ENCODE measurements at regions of chr3 and their contacts with region 1.

Region 1: GRCh38 chr3:55169608-55170010 is 241.8 kb upstream of the LRTM1 start:
- DNase-seq: no peak
- ATAC-seq: no peak
- H3K4me3 ChIP-seq: no peak overlapping the region
- H3K27ac ChIP-seq: no peak overlapping the region
- H3K4me1 ChIP-seq: no peaks in the 10 kb centered on the region
- H3K27me3 ChIP-seq: no peaks in the 10 kb centered on the region

Region 2: DNA sequence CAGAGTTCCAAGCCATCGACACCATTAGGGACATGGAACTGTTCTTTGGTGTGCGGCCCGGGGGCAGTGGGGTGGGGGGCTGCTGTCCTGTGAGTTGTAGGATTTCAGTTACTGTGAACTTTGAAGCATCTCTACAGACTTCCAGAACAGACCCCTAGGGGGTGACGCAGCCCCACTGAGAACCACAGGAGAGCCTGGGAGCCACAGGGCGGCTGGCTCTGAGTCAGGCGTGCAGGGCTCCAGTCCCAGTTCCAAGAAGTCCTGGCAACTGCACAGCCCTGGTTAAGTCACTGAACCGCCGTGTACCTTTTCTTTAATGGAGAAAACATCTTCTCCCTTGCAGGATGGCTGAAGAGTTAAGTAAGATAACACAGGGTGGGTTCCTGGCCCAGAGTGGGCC is 218.2 kb before region 1 on chr3:
- intact Hi-C with region 1: loop called in 1 of 4 experiments (anchors 10 kb)
- DNase-seq: peak; percentile 83 to 94 (median 91)
- ATAC-seq: peak; percentile 97
- H3K4me3 ChIP-seq: no peak overlapping the region
- H3K27ac ChIP-seq: no peak overlapping the region
- H3K4me1 ChIP-seq: no peaks in the 10 kb centered on the region
- H3K27me3 ChIP-seq: no peaks in the 10 kb centered on the region

Measured in right cardiac atrium (tissue), 5 donors.